ENCODE measurements at regions of chr5 and their contacts with region 1.

Region 1: GRCh38 chr5:159163027-159163700 is 46.2 kb downstream of the RNF145 start:
- DNase-seq: peak; percentile 38
- ATAC-seq: peak; percentile 96
- H3K4me3 Mint-ChIP-seq: no peak overlapping the region
- H3K27ac Mint-ChIP-seq: peak overlapping the region; percentile 82
- H3K4me1 Mint-ChIP-seq: peaks cover 48% of the 10 kb centered on the region
- H3K27me3 Mint-ChIP-seq: no peaks in the 10 kb centered on the region

Region 2: DNA sequence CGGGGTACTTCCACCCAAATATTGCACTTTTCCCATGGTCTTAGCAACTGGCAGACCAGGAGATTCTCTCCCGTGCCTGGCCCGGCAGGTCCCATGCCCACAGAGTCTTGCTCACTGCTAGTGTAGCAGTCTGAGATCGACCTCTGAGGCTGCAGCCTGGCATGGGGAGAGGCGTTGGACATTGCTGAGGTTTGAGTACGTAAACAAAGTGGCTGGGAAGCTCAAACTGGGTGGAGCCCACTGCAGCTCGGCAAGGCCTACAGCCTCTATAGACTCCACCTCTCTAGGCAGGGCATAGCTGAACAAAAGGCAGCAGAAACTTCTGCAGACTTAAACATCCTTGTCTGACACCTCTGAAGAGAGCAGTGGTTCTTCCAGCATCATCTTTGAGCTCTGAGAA is 23.4 kb before region 1 on chr5:
- CTCF ChIA-PET with region 1: no interaction called
- POLR2A ChIA-PET with region 1: no interaction called
- intact Hi-C with region 1: no loop called
- DNase-seq: no peak
- ATAC-seq: no peak
- H3K4me3 Mint-ChIP-seq: no peak overlapping the region
- H3K27ac Mint-ChIP-seq: no peak overlapping the region
- H3K4me1 Mint-ChIP-seq: no peaks in the 10 kb centered on the region
- H3K27me3 Mint-ChIP-seq: peaks cover 22% of the 10 kb centered on the region

Region 3: DNA sequence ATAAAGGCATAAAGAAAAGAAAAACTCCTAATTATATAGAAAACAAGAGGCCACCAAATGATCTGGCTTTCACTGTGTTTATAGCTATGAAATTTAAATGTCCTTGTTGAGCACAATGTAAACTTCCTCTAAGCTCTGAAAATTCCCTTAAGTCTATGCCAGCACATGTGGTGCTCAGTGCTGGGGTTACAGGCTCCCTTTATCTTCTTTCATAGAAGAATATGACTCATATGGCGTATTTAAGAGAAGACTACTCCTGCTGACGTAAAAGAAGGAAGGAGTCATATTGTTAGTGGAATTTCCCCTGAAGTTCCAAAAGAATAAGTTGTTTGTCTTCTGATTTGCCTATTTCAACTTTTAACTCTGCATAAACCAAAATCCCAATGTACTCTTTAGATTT is 15.8 kb after region 1 on chr5:
- CTCF ChIA-PET with region 1: interaction called, 4 read pairs
- POLR2A ChIA-PET with region 1: interaction called, 3 read pairs
- intact Hi-C with region 1: loop called (anchors 1 to 2 kb)
- DNase-seq: peak; percentile 55
- ATAC-seq: peak; percentile 92
- H3K4me3 Mint-ChIP-seq: peak overlapping the region; percentile 46
- H3K27ac Mint-ChIP-seq: peak overlapping the region; percentile 91
- H3K4me1 Mint-ChIP-seq: peaks cover 87% of the 10 kb centered on the region
- H3K27me3 Mint-ChIP-seq: no peaks in the 10 kb centered on the region

Region 4: DNA sequence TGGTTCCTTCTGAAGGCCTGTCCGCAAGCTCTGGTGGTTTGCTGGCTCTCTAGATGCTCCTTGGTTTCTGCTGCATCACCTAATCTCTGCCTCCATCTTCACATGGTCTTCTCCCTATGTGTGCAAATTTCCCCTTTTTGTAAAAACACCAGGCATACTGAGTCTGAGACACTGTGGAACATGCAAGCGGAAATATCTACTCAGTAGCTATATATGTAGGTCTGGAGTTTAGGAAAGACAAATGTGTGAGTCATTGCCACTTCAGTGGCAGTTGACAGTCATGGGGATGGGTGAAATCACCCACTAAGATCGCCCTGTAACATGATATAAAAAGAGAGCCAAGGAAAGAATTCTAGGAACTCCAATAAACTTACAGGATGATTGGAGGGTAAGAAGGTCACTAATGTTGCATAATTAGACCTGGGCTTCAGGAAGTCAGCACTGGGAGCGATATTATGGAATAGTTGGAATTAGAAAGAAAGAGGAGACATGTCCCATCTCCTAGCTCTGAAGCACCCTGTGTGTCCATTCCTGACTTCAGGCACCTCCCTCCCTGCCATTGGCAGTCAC is 77.2 kb after region 1 on chr5:
- CTCF ChIA-PET with region 1: no interaction called
- POLR2A ChIA-PET with region 1: interaction called, 4 read pairs
- intact Hi-C with region 1: loop called (anchors 2 kb)
- DNase-seq: peak; percentile 25
- ATAC-seq: peak; percentile 84
- H3K4me3 Mint-ChIP-seq: no peak overlapping the region
- H3K27ac Mint-ChIP-seq: peak overlapping the region; percentile 62
- H3K4me1 Mint-ChIP-seq: peaks cover 45% of the 10 kb centered on the region
- H3K27me3 Mint-ChIP-seq: no peaks in the 10 kb centered on the region